ENCODE measurements at regions of chrX and their contacts with region 1.

Region 1: DNA sequence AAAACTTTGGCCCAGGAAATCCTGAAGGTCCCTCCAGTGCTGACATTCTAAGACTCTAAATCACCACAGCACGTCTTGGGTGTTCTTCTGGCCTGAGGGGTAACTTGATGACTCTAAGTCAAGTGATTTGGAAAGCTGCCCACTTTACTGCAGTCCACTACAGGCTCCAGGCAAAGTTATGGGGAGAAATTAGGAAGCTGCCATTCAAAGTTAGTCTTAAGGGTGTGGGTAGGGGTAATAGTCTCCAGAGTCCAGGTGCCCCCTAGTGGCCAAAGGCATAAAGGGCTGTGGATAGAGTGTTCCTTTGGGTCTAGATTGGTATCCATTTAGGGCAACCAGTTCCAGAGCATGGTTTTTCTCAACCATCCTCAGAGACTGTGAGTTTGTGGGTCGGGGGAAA is 38.7 kb upstream of the SLC16A2 start:
- DNase-seq: no peak
- H3K4me3 ChIP-seq: no peak overlapping the region
- CTCF ChIP-seq: peak; percentile 68

Region 2: DNA sequence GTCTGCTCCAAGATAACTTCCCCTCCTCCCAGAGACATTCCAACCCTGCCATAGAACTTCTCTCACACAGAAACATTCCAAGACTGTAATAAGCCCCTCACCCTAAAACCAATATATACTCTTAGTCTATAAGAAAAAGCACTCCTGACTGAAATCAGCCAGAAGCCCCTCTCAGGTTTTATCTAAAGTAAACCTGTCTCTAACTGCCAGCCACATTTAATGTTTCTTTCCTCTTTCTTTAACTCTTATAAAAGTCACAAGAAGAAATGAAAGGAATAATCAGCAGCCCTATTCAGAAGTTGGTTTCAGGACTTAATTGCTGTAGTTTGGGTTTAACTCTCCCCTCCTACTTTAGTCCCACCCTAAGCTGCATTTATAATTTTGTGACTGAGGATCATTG is 243.7 kb before region 1 on chrX:
- CTCF ChIA-PET with region 1: no interaction called
- POLR2A ChIA-PET with region 1: no interaction called
- DNase-seq: no peak
- H3K4me3 ChIP-seq: no peak overlapping the region
- CTCF ChIP-seq: no peak

Region 3: GRCh38 chrX:74371425-74372222 is 11.0 kb before region 1 on chrX:
- CTCF ChIA-PET with region 1: interaction called, 30 read pairs
- POLR2A ChIA-PET with region 1: no interaction called
- DNase-seq: no peak
- H3K4me3 ChIP-seq: no peak overlapping the region
- CTCF ChIP-seq: no peak

Region 4: DNA sequence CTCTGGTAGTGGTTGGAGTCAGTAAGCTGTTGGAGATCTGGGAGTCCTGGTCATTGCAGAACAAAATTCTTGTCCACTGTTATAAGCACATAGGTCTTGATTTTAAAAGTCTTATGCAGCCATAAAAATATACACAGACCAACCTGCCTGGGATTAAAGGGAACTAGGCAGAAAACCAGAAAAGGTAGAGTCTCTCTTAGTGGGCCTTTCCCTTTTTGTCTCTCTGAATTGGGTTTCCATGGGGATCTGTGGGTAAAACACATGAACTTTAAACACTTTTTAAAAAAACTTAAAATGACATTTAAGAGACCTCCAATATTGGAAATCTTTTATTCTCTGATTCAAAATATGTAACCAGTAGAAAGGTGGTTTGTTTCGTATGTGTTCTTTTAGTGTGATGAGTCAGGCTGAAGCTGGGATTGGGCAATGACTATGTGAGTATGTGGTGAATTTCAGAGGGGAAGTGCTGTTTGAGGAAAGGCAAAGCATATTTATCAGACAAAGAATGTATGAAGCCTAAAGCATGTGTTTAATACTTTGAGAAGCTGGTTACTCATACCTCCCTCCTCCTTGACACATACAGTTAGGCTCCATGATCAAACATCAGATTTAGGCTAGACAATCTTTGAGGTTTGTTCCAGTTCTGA is 68.3 kb after region 1 on chrX:
- CTCF ChIA-PET with region 1: interaction called, 30 read pairs
- POLR2A ChIA-PET with region 1: no interaction called
- DNase-seq: peak; percentile 83
- H3K4me3 ChIP-seq: no peak overlapping the region
- CTCF ChIP-seq: no peak

Region 5: DNA sequence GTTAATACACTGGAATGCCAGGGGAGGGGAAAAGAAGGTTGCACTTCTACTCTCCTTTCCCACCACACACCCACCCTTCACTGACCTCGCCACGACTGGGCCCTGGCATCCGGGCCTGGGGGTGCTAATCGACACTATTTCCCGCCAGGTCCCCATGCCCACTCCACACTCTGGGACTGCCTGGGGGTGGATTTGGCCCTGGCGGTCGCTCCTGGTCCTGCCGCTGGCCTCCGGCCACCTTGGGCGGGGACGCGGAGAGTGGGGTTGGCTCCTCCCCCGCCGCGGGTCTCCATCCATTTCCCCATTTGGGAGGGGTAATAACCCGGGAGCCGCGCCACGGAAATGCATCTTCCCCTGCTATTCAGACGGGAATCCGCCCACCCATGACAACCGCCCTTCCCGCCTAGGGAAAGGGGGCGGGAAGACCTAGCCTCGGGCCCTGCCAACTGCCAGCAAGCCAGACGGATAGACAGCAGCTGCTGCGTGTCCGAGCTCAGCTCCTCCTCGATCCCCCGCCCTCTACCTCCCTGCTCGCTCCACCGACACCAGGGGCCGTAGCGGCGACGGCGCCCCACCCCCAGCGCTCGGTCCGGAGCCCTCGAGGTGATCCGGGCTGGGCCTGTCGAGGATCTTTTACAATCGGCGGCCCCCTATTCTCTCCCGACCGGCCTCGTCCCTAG is 153.7 kb after region 1 on chrX:
- CTCF ChIA-PET with region 1: interaction called, 26 read pairs
- POLR2A ChIA-PET with region 1: no interaction called
- DNase-seq: no peak
- H3K4me3 ChIP-seq: peak overlapping the region; percentile 49
- CTCF ChIP-seq: peak; percentile 54

Region 6: DNA sequence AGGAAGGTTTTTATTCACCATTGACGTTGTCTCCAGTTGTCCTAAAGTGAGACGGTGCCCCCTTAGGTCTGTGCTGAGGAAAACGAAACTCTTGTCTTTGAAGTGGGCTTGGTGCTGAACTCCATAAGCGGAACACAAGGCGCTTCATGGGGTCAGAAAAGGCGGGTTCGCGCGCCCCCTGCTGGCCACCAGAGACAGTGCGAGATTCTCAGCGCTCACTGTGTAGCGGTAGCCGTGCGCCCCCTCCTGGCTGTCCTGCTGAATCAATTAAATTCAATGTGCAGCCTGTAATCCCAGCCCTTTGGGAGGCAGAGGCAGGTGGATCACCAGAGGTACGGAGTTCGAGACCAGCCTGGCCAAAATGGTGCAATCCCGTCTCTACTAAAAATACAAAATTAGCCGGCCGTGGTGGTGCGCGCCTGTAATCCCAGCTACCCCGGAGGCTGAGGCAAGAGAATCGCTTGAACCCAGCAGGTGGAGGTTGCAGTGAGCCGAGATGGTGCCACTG is 167.7 kb after region 1 on chrX:
- CTCF ChIA-PET with region 1: interaction called, 58 read pairs
- POLR2A ChIA-PET with region 1: no interaction called
- DNase-seq: no peak
- H3K4me3 ChIP-seq: peak overlapping the region; percentile 42
- CTCF ChIP-seq: peak; percentile 92

Region 7: GRCh38 chrX:74579597-74580198 is 197.1 kb after region 1 on chrX:
- CTCF ChIA-PET with region 1: no interaction called
- POLR2A ChIA-PET with region 1: no interaction called
- DNase-seq: no peak
- H3K4me3 ChIP-seq: no peak overlapping the region
- CTCF ChIP-seq: no peak

Region 8: DNA sequence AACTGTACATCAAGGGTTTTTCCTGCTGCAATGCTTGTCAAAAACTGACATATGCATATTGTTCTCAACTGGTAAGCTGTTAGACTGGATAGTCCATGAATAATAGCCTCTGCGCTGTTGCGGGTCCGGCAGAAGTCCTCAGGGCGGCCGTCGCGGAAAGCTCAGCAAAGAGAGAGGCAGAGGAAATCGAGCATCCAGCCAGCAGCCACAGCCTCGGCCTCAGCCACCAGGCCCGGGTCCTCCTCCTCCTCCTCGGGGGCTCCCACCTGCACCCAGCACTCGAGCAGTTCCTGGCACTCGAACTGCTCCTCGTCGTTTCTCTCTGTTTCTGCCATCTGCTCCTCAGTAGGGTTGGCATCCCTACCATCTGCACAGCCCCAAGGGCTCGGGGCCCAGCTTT is 945.0 kb after region 1 on chrX:
- CTCF ChIA-PET with region 1: no interaction called
- POLR2A ChIA-PET with region 1: no interaction called
- DNase-seq: no peak
- H3K4me3 ChIP-seq: no peak overlapping the region
- CTCF ChIP-seq: no peak

Measured in AG04449 (cell line).